ENCODE measurements at regions of chr17 and their contacts with region 1.

Region 1: GRCh38 chr17:72539981-72540897 is 419.4 kb downstream of the SOX9 start:
- DNase-seq: peak; percentile 89
- CTCF ChIP-seq: peak; percentile 100

Region 2: GRCh38 chr17:70636517-70637133 is 1903.6 kb before region 1 on chr17:
- in situ Hi-C with region 1: loop called (anchors 25 kb)
- DNase-seq: peak; percentile 31
- CTCF ChIP-seq: peak; percentile 57

Region 3: DNA sequence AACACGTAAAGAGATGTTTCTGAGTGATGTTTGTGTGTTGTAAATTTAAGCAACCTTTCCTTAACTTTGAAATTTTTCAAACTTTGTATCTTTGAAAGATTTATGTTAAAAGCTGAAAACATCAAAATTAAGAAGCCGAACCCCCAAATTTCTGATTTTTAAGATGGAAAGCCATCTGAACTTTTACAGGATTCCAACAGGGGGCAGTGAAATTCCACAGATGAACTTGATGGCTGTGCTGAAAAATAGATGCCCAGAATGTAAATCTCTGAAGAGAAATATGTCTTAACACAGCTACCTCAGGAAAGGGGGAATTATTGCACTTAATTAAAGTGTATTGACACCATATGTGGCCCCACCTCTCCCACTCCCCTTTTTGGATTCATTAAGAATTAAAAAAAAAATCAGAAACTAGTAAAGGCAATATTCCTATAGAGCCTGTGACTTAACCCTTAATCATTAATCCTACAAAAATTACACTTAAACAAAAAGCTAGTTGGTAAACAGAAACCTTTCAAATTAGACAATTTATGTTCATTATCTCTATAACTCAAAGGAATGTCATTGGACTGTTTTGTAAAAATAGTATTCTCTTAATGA is 1773.0 kb before region 1 on chr17:
- in situ Hi-C with region 1: loop called (anchors 25 kb)
- DNase-seq: peak; percentile 22
- CTCF ChIP-seq: peak; percentile 50

Region 4: GRCh38 chr17:71472809-71473789 is 1067.1 kb before region 1 on chr17:
- in situ Hi-C with region 1: loop called (anchors 25 kb)
- DNase-seq: peak; percentile 42
- CTCF ChIP-seq: peak; percentile 68

Region 5: GRCh38 chr17:72120642-72121163 is 419.5 kb before region 1 on chr17 and contains the start of gene SOX9:
- in situ Hi-C with region 1: loop called (anchors 25 kb)
- DNase-seq: peak; percentile 97
- CTCF ChIP-seq: no peak

Measured in GM13977 (cell line).